CD8-positive, alpha-beta memory T cell (primary cell): ENCODE measurements at regions of chr5 and their contacts with region 1.

Region 1: DNA sequence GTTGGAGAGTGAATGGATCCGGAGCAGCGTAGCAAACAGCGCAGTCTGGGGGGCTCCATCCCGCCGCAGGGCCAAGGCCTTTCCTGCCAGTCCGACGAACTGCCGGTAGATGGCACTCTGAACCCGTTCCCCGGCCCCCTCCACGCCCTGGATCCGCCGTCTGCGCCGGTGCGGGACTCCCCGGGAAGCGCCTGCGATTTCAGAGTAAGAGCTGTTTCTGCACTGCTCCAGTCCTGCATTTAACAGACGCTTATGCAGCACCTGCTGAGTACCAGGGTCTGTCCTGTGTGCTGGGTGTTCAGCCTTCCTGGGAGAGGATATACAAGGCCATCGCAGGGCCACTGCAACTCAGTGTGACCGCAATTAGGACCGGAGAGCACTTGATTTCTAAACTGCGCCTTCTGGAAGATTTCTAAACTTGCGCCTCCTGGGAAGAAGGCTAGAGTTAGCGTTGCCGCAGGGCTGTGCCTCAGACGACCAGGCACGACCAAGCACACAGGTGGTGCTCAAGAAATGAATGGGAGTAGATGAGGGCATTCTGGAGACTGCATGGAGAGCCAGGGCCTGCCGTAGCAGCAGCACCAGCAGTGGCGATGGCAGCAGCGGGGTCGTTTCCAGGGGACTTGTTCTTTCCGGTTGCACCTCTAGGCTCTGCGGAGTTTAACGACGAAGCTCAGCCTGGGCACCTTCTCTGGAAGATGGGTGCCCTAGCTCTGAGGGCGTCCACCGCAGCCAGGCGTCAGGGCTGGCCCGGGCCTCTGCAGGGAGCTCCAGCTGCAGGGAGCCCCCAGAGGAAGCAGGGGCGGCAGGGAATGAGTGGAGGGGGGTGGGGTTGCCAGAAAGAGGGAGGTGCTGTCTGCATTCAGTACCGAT is 14.3 kb upstream of the TIFAB start:
- DNase-seq: peak; percentile 35 to 58 (median 37)
- H3K4me3 ChIP-seq: peak overlapping the region; percentile 49
- H3K4me3 Mint-ChIP-seq: peak overlapping the region in 5 of 7 donors; percentile 8 to 72 (median 59)
- H3K27ac ChIP-seq: no peak overlapping the region
- H3K27ac Mint-ChIP-seq: peak overlapping the region in 1 of 8 donors; percentile 13
- H3K4me1 ChIP-seq: peaks cover 4% of the 10 kb centered on the region
- H3K4me1 Mint-ChIP-seq: peaks cover 5 to 15% (median 6%) of the 10 kb centered on the region in 3 donors
- H3K27me3 ChIP-seq: peaks cover 9% of the 10 kb centered on the region
- H3K27me3 Mint-ChIP-seq: peaks cover 36 to 68% of the 10 kb centered on the region in 2 donors

Region 2: DNA sequence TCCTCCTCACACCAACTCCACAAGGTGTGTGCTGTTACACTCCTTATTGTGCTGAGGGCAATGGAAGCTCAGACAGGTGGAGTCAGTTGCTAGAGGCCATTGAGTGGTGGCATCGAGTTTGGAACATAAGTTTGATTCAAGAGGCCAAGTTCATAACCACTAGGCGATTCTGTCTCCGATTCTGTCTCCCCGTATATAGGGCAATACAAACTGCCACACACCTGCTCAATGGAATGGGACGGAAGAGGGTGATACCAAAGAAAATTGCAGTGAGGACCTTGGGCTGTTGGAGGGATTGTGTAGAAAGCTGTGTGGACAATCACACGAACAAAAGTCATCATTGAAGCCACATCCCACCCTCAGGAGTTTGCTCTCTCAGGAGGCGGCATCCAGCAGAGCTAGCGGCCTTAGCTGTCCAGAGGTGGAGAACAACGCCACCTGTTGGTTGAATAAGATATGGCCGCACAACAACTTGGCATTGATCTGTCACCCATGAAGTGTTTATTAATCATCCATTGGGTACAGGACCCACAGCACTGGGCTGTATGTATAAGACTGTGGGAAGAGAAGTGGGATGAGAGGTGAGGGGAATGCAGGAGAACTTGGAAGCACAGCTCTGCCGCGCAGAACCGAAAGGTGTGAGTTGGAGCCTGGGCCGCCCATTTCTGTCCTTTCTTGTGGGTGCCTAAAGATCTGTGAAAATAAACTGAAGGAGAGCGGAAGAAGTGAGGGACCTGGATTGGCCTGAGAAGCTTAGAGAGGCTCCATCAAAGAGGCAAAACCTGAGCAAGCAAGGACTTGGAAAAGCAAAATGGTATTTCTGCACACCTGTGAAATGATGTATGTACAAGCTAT is 85.4 kb after region 1 on chr5:
- CTCF ChIA-PET with region 1: interaction called, 13 read pairs
- POLR2A ChIA-PET with region 1: no interaction called
- DNase-seq: peak; percentile 16 to 55 (median 19)
- H3K4me3 ChIP-seq: no peak overlapping the region
- H3K4me3 Mint-ChIP-seq: no peak overlapping the region
- H3K27ac ChIP-seq: no peak overlapping the region
- H3K27ac Mint-ChIP-seq: no peak overlapping the region
- H3K4me1 ChIP-seq: no peaks in the 10 kb centered on the region
- H3K4me1 Mint-ChIP-seq: peaks cover 0 to 2% (median 0%) of the 10 kb centered on the region in 3 donors
- H3K27me3 ChIP-seq: no peaks in the 10 kb centered on the region
- H3K27me3 Mint-ChIP-seq: peaks cover 33 to 78% of the 10 kb centered on the region in 2 donors

Region 3: GRCh38 chr5:135565725-135566421 is 99.5 kb after region 1 on chr5:
- CTCF ChIA-PET with region 1: interaction called, 20 read pairs
- POLR2A ChIA-PET with region 1: no interaction called
- DNase-seq: peak; percentile 14 to 67 (median 42)
- H3K4me3 ChIP-seq: no peak overlapping the region
- H3K4me3 Mint-ChIP-seq: no peak overlapping the region
- H3K27ac ChIP-seq: no peak overlapping the region
- H3K27ac Mint-ChIP-seq: no peak overlapping the region
- H3K4me1 ChIP-seq: peaks cover 7% of the 10 kb centered on the region
- H3K4me1 Mint-ChIP-seq: peaks cover 3 to 14% (median 4%) of the 10 kb centered on the region in 3 donors
- H3K27me3 ChIP-seq: no peaks in the 10 kb centered on the region
- H3K27me3 Mint-ChIP-seq: peaks cover 4 to 17% of the 10 kb centered on the region in 2 donors

Region 4: GRCh38 chr5:135694012-135694411 is 227.6 kb after region 1 on chr5:
- CTCF ChIA-PET with region 1: no interaction called
- POLR2A ChIA-PET with region 1: no interaction called
- DNase-seq: no peak
- H3K4me3 ChIP-seq: no peak overlapping the region
- H3K4me3 Mint-ChIP-seq: no peak overlapping the region
- H3K27ac ChIP-seq: no peak overlapping the region
- H3K27ac Mint-ChIP-seq: no peak overlapping the region
- H3K4me1 ChIP-seq: no peaks in the 10 kb centered on the region
- H3K4me1 Mint-ChIP-seq: no peaks in the 10 kb centered on the region
- H3K27me3 ChIP-seq: no peaks in the 10 kb centered on the region
- H3K27me3 Mint-ChIP-seq: peaks cover 7 to 23% of the 10 kb centered on the region in 2 donors